ENCODE measurements at regions of chr6 and their contacts with region 1.

Region 1: DNA sequence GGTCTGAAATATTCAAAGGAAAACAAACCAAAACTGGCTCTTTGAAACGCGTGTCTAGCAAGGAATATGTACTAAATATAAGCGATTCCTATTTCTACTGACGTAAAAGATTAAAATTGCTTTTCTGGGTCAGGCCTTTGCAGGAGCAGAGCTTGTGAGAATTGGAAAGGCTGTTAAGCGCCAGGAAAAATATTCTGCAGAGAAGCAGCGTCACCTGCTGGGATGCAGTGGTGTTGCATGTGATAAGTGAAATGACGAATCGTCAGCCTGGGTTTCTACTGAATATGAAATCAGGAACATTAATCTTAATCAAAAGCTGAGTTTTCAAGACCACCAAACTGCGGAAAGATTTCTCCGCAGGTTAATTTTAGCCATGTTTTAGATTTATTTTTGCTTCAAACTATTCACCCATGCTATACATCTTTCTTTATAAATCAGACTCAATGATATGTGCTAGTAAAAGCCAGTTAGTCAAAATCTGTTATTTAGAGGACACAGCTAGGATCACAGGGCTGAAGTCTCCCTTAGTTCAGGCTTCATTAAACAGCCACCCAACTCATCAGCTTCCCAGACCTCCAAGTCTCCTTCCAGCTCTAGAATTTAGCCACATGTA is 67.4 kb downstream of the ALDH8A1 start:
- DNase-seq: peak; percentile 34 to 38
- ATAC-seq: peak in 6 of 8 donors; percentile 51 to 79 (median 61)
- H3K4me3 ChIP-seq: no peak overlapping the region
- H3K27ac ChIP-seq: no peak overlapping the region
- H3K4me1 ChIP-seq: peaks cover 0 to 9% (median 0%) of the 10 kb centered on the region in 9 donors
- H3K27me3 ChIP-seq: peaks cover 0 to 7% (median 0%) of the 10 kb centered on the region in 7 donors
- CTCF ChIP-seq: peak; percentile 61 to 96 (median 94)

Region 2: GRCh38 chr6:134123666-134124208 is 758.8 kb before region 1 on chr6:
- intact Hi-C with region 1: loop called in 4 of 10 experiments (anchors 2 to 10 kb)
- DNase-seq: no peak
- ATAC-seq: peak in 1 of 8 donors; percentile 35
- H3K4me3 ChIP-seq: no peak overlapping the region
- H3K27ac ChIP-seq: no peak overlapping the region
- H3K4me1 ChIP-seq: peaks cover 0 to 6% (median 0%) of the 10 kb centered on the region in 9 donors
- H3K27me3 ChIP-seq: no peaks in the 10 kb centered on the region
- CTCF ChIP-seq: peak; percentile 38 to 82 (median 73)

Region 3: GRCh38 chr6:134152767-134153485 is 729.6 kb before region 1 on chr6:
- intact Hi-C with region 1: loop called in 7 of 10 experiments (anchors 2 to 5 kb)
- DNase-seq: no peak
- ATAC-seq: peak in 1 of 8 donors; percentile 35
- H3K4me3 ChIP-seq: no peak overlapping the region
- H3K27ac ChIP-seq: no peak overlapping the region
- H3K4me1 ChIP-seq: peaks cover 0 to 5% (median 0%) of the 10 kb centered on the region in 9 donors
- H3K27me3 ChIP-seq: no peaks in the 10 kb centered on the region
- CTCF ChIP-seq: no peak

Region 4: GRCh38 chr6:134161036-134161435 is 721.5 kb before region 1 on chr6:
- intact Hi-C with region 1: loop called in 6 of 10 experiments (anchors 2 to 5 kb)
- DNase-seq: no peak
- ATAC-seq: no peak
- H3K4me3 ChIP-seq: no peak overlapping the region
- H3K27ac ChIP-seq: no peak overlapping the region
- H3K4me1 ChIP-seq: no peaks in the 10 kb centered on the region
- H3K27me3 ChIP-seq: no peaks in the 10 kb centered on the region
- CTCF ChIP-seq: no peak

Region 5: DNA sequence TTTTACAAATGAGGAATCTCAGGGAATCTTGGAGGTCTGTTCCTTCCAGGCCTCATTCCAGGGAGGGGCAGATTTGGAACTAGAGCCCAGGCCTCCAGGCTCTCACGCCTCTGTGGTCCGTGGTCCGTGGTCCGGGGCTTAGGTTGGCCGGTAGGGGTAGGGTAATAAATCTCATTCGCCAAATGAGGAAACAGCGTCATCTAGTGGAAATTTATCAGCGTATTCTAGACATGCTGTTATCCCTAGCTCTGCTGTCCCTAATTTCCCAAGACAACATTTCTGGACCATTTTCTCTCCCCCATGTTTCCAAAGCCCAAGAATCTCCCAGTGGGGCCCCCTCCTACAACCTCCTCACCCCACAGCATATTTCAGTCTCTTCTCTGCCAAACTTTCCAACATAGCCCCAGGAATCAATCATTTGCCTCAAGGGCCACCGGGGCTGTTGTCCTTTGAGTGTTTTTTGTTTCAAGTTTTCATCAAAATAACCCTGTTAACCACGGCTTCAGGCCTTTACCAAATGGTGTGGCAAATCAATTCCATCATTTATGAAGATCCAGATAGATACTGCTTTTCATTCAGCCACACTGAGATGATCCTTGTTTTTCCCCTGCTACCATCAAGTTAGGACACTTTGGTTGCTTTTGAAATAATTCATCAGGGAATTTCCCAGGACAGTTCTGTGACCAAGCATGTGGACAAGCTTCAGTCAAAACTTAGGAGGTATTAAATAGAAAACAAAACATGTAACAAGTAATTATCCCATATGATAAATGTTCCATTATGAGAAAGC is 59.4 kb before region 1 on chr6:
- intact Hi-C with region 1: loop called in 2 of 10 experiments (anchors 2 to 10 kb)
- DNase-seq: peak in 1 of 2 donors; percentile 74
- ATAC-seq: peak; percentile 88 to 96 (median 90)
- H3K4me3 ChIP-seq: no peak overlapping the region
- H3K27ac ChIP-seq: no peak overlapping the region
- H3K4me1 ChIP-seq: peaks cover 0 to 25% (median 12%) of the 10 kb centered on the region in 9 donors
- H3K27me3 ChIP-seq: no peaks in the 10 kb centered on the region
- CTCF ChIP-seq: peak; percentile 78 to 93 (median 88)

Region 6: GRCh38 chr6:135257631-135258405 is 375.3 kb after region 1 on chr6:
- intact Hi-C with region 1: no loop called
- DNase-seq: no peak
- ATAC-seq: no peak
- H3K4me3 ChIP-seq: no peak overlapping the region
- H3K27ac ChIP-seq: no peak overlapping the region
- H3K4me1 ChIP-seq: no peaks in the 10 kb centered on the region
- H3K27me3 ChIP-seq: peaks cover 0 to 10% (median 7%) of the 10 kb centered on the region in 7 donors
- CTCF ChIP-seq: no peak

Region 7: GRCh38 chr6:136007345-136007744 is 1124.8 kb after region 1 on chr6:
- intact Hi-C with region 1: no loop called
- DNase-seq: no peak
- ATAC-seq: peak in 1 of 8 donors; percentile 34
- H3K4me3 ChIP-seq: no peak overlapping the region
- H3K27ac ChIP-seq: no peak overlapping the region
- H3K4me1 ChIP-seq: peaks cover 0 to 20% (median 8%) of the 10 kb centered on the region in 9 donors
- H3K27me3 ChIP-seq: no peaks in the 10 kb centered on the region
- CTCF ChIP-seq: no peak

Measured in heart right ventricle (tissue), 16 donors.